ENCODE measurements at regions of chr4 and their contacts with region 1.

Region 1: GRCh38 chr4:176319704-176320339 is at the start of gene SPCS3:
- DNase-seq: peak; percentile 90 to 95
- H3K4me3 ChIP-seq: peak within 1 kb of the TSS; percentile 99
- H3K4me3 Mint-ChIP-seq: peak within 1 kb of the TSS; percentile 84
- H3K27ac Mint-ChIP-seq: peak within 1 kb of the TSS; percentile 81
- H3K4me1 ChIP-seq: no peaks in the 10 kb centered on the region; the same call in 1 of the 2 replicates
- H3K4me1 Mint-ChIP-seq: no peaks in the 10 kb centered on the region
- H3K27me3 ChIP-seq: no peaks in the 10 kb centered on the region
- H3K27me3 Mint-ChIP-seq: no peaks in the 10 kb centered on the region
- CTCF ChIP-seq: no peak
- total RNA-seq, gene SPCS3: 54.5 and 56.2 TPM in 2 replicates

Region 2: DNA sequence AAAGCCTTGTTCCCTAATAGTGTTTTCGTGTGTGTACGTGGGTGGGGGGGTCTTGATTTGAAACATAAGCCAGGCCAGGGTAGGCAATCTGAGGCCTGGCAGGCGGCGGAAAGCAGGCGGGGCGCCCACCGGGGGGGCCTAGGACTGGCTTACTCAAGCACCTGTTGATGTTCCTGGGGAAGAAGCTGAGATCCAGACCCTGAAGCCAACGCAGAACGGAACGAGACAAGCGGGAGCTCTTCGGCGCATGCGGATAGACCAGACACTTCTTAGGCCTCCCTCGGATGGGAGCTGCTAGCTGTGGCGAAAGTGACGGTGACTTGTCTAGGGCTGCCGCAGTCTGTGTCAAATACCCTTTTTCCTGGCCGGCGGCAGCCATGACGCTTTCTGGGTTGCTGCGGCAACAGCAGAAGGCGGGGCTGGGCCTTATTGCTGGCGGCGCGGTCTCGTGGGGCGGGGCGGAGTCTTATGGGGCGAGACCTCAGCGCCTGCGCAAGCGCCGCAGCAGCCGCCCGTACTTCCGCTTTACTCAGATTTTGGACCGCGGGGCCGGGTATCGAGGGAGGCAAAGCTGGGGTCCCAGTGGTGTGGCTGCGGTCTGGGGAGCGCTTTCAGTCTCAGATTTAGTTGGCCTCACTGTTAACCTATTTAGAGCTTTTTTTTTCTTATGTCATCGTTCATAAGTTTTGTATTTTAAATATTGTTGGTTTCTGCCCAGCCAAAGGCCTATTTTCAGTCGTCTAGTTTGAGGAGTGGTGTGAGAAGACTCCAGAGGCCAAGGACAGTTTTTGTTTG is 124.4 kb before region 1 on chr4 and contains the start of gene SPATA4:
- CTCF ChIA-PET with region 1: no interaction called
- POLR2A ChIA-PET with region 1: no interaction called
- intact Hi-C with region 1: loop called (anchors 1 kb)
- DNase-seq: peak; percentile 88 to 89
- H3K4me3 ChIP-seq: peak within 1 kb of the TSS; percentile 51
- H3K4me3 Mint-ChIP-seq: peak within 1 kb of the TSS; percentile 84
- H3K27ac Mint-ChIP-seq: peak within 1 kb of the TSS; percentile 84
- H3K4me1 ChIP-seq: peaks cover 3% of the 10 kb centered on the region; the same call in 1 of the 2 replicates
- H3K4me1 Mint-ChIP-seq: peaks cover 5% of the 10 kb centered on the region
- H3K27me3 ChIP-seq: no peaks in the 10 kb centered on the region
- H3K27me3 Mint-ChIP-seq: peaks cover 12% of the 10 kb centered on the region
- CTCF ChIP-seq: no peak
- total RNA-seq, gene SPATA4: not detected in 2 replicates